Activated CD4-positive, alpha-beta memory T cell treated with anti-CD3 and anti-CD28 coated beads for 36 hours (primary cell): ENCODE measurements at regions of chr3 and their contacts with region 1.

Region 1: GRCh38 chr3:43389388-43390254 is 103.3 kb downstream of the SNRK start:
- DNase-seq: peak; percentile 85
- H3K4me3 Mint-ChIP-seq: peak overlapping the region; percentile 27
- H3K27ac Mint-ChIP-seq: peak overlapping the region; percentile 86
- H3K4me1 Mint-ChIP-seq: peaks cover 69% of the 10 kb centered on the region
- H3K27me3 Mint-ChIP-seq: no peaks in the 10 kb centered on the region

Region 2: DNA sequence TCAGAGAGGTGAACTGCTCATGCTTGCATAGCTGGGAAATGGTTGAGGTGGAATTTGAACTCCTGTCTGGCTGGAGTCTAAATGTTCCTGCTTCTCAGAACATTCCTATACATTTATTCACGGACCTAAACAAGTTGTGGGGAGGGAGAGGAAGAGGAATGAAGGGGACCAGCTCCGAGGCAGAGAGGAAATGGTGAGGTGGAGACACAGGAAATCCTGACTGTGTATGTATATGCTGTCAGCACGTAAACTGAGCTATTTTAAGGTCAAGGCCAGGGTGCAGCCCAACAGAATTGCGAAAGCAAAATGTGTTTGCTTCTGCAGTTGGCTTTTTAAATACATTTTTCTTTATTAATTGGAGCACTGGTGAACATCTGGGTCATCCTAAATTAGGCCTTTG is 209.6 kb before region 1 on chr3:
- CTCF ChIA-PET with region 1: no interaction called
- POLR2A ChIA-PET with region 1: no interaction called
- intact Hi-C with region 1: loop called (anchors 1 kb)
- DNase-seq: peak; percentile 54
- H3K4me3 Mint-ChIP-seq: no peak overlapping the region
- H3K27ac Mint-ChIP-seq: peak overlapping the region; percentile 54
- H3K4me1 Mint-ChIP-seq: peaks cover 37% of the 10 kb centered on the region
- H3K27me3 Mint-ChIP-seq: no peaks in the 10 kb centered on the region

Region 3: GRCh38 chr3:43326891-43327581 is 62.6 kb before region 1 on chr3:
- CTCF ChIA-PET with region 1: no interaction called
- POLR2A ChIA-PET with region 1: no interaction called
- intact Hi-C with region 1: no loop called
- DNase-seq: no peak
- H3K4me3 Mint-ChIP-seq: no peak overlapping the region
- H3K27ac Mint-ChIP-seq: peak overlapping the region; percentile 52
- H3K4me1 Mint-ChIP-seq: peaks cover 62% of the 10 kb centered on the region
- H3K27me3 Mint-ChIP-seq: no peaks in the 10 kb centered on the region

Region 4: GRCh38 chr3:43345877-43346276 is 43.7 kb before region 1 on chr3:
- CTCF ChIA-PET with region 1: no interaction called
- POLR2A ChIA-PET with region 1: no interaction called
- intact Hi-C with region 1: loop called (anchors 2 kb)
- DNase-seq: peak; percentile 54
- H3K4me3 Mint-ChIP-seq: no peak overlapping the region
- H3K27ac Mint-ChIP-seq: peak overlapping the region; percentile 75
- H3K4me1 Mint-ChIP-seq: peaks cover 56% of the 10 kb centered on the region
- H3K27me3 Mint-ChIP-seq: no peaks in the 10 kb centered on the region

Region 5: DNA sequence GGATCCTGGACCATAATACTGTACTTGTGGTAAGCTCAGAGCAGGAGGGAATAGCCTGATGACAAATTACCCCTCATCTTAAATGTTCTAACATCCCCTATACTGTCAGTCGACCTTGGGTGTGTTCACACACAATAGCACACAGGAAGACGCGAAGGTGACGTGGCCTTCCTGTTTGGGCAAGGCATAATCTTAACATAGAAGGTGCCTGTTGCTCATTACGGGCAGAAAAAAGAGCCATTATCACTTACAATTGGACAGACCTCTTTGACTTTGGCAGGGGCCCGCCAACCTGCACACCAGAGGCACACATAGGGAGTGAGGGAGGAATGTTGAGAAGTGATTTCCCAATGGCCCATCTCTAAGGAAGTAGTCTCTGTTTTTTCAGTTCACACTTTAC is 88.0 kb after region 1 on chr3:
- CTCF ChIA-PET with region 1: interaction called, 3 read pairs
- POLR2A ChIA-PET with region 1: no interaction called
- intact Hi-C with region 1: loop called (anchors 1 kb)
- DNase-seq: peak; percentile 80
- H3K4me3 Mint-ChIP-seq: peak overlapping the region; percentile 11
- H3K27ac Mint-ChIP-seq: peak overlapping the region; percentile 88
- H3K4me1 Mint-ChIP-seq: peaks cover 32% of the 10 kb centered on the region
- H3K27me3 Mint-ChIP-seq: no peaks in the 10 kb centered on the region

Region 6: DNA sequence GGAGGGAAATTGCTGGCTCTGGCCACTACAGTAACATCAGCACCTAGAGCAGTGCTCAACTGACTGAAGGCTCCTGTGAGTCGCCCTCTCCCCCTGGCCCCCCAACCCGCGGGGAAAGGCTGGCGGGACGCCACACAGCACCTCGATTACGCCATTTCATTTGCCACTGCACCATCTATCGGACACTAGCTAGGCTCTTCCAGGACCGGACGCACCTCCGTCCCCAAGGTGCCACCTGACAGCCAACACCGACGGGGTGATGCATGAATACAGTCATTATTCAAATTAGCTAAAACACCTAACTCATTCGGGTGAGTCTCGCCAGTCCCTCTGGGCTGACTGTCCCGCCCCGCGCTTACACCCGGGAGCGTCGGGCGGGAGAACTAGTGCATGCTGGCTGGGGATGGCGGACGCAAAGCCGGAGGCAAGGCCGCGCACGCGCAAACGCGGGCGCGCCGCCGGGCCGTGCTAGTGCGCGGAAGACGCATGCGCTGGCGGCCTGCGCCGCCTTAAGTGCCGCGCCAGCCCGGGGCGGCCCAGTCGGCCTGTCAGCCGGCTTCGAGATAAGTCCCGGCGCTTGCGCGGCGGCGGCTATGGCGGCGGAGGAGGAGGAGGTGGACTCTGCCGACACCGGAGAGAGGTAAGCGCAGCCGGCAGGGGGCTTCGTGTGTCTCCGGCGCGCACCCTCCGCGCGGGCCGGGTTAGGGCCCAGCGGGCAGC is 300.9 kb after region 1 on chr3 and contains the start of gene ABHD5:
- CTCF ChIA-PET with region 1: no interaction called
- POLR2A ChIA-PET with region 1: no interaction called
- intact Hi-C with region 1: loop called (anchors 2 kb)
- DNase-seq: peak; percentile 92
- H3K4me3 Mint-ChIP-seq: peak within 1 kb of the TSS; percentile 84
- H3K27ac Mint-ChIP-seq: peak within 1 kb of the TSS; percentile 85
- H3K4me1 Mint-ChIP-seq: peaks cover 37% of the 10 kb centered on the region
- H3K27me3 Mint-ChIP-seq: no peaks in the 10 kb centered on the region
- total RNA-seq, gene ABHD5: 10.0 to 11.4 TPM